HCT116 (cell line): ENCODE measurements at regions of chr15 and their contacts with region 1.

Region 1: DNA sequence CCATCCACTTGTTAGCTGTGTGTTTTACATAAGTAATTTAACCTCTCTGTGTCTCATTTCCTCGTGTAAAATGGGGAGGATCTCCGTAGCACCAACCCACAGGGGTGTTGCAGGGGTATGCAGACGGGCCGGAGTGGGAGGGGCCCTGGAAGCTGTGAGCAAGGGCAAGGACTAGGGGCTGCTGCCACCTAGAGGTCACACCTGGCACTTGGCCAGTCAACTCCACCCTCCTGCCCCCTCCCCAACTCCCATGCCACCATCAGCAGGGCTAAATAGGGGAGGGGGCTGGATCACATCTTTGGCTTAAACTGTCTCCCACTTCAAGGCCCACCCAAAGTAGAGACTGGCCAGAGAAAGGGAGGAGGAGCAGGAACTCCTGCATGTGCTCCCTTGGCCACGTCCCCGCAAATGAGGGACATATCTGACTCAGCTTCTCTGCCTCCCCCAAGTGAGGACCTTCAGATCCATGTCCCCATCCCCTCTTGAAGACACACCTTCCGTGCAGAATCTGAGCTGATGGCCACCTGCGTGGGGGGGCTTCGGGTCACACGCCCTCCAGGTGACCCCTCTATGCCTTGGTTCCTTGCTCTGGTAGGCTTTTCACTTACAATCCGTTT is 2.6 kb downstream of the CCDC9B start:
- DNase-seq: peak; percentile 35
- ATAC-seq: peak; percentile 48
- H3K4me3 ChIP-seq: peak overlapping the region in 1 of 2 experiments; percentile 60; a peak in 2 of 4 replicates
- H3K27ac ChIP-seq: peak overlapping the region; percentile 92
- H3K4me1 ChIP-seq: peaks cover 41 to 58% of the 10 kb centered on the region in 2 experiments
- H3K27me3 ChIP-seq: no peaks in the 10 kb centered on the region
- CTCF ChIP-seq: peak in 2 of 3 experiments; percentile 86 to 90; a peak in 4 of 6 replicates
- POLR2A ChIP-seq: no peak
- RAD21 ChIP-seq: no peak

Region 2: DNA sequence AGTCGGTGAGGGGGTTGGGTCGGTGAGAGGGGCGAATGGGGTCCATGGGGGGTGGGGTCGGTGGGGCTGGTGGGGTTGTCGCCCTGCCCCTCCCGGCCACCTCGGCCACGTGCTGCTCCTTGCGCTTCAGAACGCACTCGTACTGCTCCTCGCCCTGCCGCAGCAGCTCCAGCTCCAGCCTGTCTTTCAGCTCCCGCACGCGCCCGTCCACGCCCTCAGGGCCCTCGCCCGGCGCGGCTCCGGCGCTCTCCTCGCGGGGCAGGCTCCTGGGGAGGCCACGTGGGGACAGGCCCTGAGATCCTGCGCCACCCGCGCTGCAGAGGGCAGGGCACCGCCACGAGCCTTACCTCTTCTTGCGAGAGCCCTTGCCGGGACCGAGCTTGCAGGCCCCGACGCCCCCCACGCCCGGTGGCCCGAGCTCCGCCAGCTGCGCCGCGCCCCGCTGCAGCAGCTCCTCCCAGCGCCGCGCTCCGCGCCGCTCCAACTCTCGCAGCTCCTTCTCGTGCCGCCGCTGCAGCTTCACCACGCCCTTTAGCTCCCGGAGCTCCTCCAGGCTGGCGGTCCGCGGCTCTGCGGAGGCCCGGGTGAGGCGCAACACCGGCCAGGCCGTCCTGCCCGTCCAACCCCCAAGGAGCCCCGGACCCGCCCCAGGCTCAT is 47.1 kb before region 1 on chr15:
- CTCF ChIA-PET with region 1: interaction called, 13 read pairs
- POLR2A ChIA-PET with region 1: no interaction called
- RAD21 ChIA-PET with region 1: interaction called in 1 of 2 experiments, 4 read pairs
- intact Hi-C with region 1: no loop called
- DNase-seq: no peak
- ATAC-seq: peak; percentile 82
- H3K4me3 ChIP-seq: peak overlapping the region; percentile 30 to 49
- H3K27ac ChIP-seq: peak overlapping the region; percentile 45; the same call in 1 of the 2 replicates
- H3K4me1 ChIP-seq: peaks cover 46 to 51% of the 10 kb centered on the region in 2 experiments
- H3K27me3 ChIP-seq: no peaks in the 10 kb centered on the region
- CTCF ChIP-seq: no peak
- POLR2A ChIP-seq: peak; percentile 39
- RAD21 ChIP-seq: no peak

Region 3: DNA sequence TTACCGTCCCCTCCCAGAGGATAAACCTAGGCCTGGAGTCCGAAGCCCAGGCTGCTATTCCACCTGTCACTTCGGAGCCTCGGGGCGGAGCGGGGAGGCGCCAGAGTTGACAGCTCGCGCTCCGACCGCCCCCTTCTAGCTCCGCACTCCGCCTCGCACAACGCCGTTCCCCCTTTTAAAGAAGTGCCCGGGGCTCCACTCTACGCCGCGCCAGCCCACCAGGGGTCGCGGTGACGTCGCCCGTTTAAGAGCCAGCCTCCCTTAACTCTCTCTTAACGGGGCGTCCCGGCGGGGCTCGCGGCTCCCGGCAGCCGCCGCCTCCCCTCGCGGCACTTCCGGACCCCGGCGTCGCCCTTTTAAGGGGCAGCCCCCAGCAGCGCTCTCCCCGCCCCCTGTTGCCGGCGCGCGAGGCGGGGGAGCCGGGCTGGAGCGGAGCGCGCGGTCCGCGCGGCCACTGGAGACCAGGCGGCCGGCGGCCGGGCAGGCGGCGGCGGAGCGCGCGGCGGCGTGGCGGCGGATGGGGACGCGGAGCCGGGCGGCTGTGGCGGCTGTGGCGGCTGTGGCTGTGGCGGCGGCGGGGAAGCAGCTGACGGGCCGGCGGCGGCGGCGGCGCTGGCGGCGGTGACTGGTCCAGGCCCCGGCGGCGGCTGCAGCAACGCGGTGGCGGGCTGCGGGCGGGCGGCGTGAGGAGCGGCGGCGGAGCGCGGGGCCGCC is 14.8 kb before region 1 on chr15 and contains the start of gene INAFM2:
- CTCF ChIA-PET with region 1: interaction called, 55 read pairs
- POLR2A ChIA-PET with region 1: interaction called, 11 read pairs
- RAD21 ChIA-PET with region 1: interaction called in 1 of 2 experiments, 3 read pairs
- intact Hi-C with region 1: no loop called
- DNase-seq: peak; percentile 81
- ATAC-seq: peak; percentile 92
- H3K4me3 ChIP-seq: peak within 1 kb of the TSS; percentile 47 to 58
- H3K27ac ChIP-seq: peak within 1 kb of the TSS; percentile 39; the same call in 1 of the 2 replicates
- H3K4me1 ChIP-seq: peaks cover 4 to 18% of the 10 kb centered on the region in 2 experiments; a peak in 3 of 4 replicates
- H3K27me3 ChIP-seq: no peaks in the 10 kb centered on the region
- CTCF ChIP-seq: peak in 2 of 3 experiments; percentile 27 to 45; a peak in 4 of 6 replicates
- POLR2A ChIP-seq: no peak
- RAD21 ChIP-seq: no peak
- total RNA-seq, gene INAFM2: 8.8 TPM

Region 4: DNA sequence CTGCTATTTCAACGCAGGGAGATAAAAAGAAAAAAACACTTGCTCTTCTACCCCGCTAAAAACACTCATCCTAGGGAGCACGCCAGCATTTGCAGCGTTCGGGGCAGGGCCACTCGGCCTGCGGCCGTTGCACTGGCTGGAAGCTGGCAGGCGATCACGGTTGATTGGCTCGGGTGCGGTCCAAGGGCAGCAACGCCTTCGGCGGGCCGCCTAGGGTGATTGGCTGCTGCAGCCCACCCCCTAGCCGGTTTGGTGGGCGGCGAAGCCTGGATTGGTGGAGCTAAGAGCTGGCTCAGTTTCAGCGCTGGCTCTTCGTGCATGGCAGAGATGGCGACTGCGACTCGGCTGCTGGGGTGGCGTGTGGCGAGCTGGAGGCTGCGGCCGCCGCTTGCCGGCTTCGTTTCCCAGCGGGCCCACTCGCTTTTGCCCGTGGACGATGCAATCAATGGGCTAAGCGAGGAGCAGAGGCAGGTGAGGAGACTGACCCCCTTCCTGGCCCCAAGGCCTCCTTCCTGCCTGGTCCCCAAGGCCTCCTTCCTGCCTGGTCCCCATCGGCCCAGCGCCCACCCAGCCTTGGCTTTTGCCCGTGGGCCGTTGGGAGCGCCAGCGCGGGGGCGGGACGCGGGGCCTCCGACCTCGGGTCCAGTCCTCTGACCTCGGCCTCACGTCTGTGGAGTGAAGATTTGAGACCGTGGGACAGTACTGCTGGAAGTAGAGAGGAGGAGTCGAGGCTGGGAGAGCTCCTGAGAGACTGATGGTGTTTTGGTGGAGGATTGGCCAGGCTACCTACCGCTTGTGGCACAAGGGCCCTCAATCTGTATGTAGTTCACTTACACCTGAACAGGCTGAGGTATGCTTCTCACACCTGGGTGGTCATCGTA is 67.6 kb after region 1 on chr15 and contains the start of gene IVD:
- CTCF ChIA-PET with region 1: interaction called, 11 read pairs
- POLR2A ChIA-PET with region 1: interaction called, 4 read pairs
- RAD21 ChIA-PET with region 1: no interaction called
- intact Hi-C with region 1: no loop called
- DNase-seq: peak; percentile 88
- ATAC-seq: peak; percentile 99
- H3K4me3 ChIP-seq: peak within 1 kb of the TSS; percentile 83 to 97
- H3K27ac ChIP-seq: peak within 1 kb of the TSS; percentile 65
- H3K4me1 ChIP-seq: peaks cover 4 to 16% of the 10 kb centered on the region in 2 experiments; a peak in 3 of 4 replicates
- H3K27me3 ChIP-seq: no peaks in the 10 kb centered on the region
- CTCF ChIP-seq: no peak
- POLR2A ChIP-seq: peak; percentile 65
- RAD21 ChIP-seq: no peak
- total RNA-seq, gene IVD: 65.6 TPM